MCF 10A (cell line): ENCODE measurements at regions of chr3 and their contacts with region 1.

Region 1: GRCh38 chr3:122415720-122416654 is at the start of gene WDR5B:
- DNase-seq: peak; percentile 98
- H3K4me3 Mint-ChIP-seq: peak within 1 kb of the TSS; percentile 99
- H3K27ac Mint-ChIP-seq: peak within 1 kb of the TSS; percentile 99
- H3K4me1 Mint-ChIP-seq: peaks cover 32% of the 10 kb centered on the region
- H3K27me3 Mint-ChIP-seq: no peaks in the 10 kb centered on the region
- CTCF ChIP-seq: no peak
- total RNA-seq, gene WDR5B: 10.0 and 11.0 TPM in 2 replicates

Region 2: GRCh38 chr3:122233101-122233952 is 182.7 kb before region 1 on chr3:
- CTCF ChIA-PET with region 1: no interaction called
- POLR2A ChIA-PET with region 1: no interaction called
- intact Hi-C with region 1: no loop called
- DNase-seq: no peak
- H3K4me3 Mint-ChIP-seq: no peak overlapping the region
- H3K27ac Mint-ChIP-seq: no peak overlapping the region
- H3K4me1 Mint-ChIP-seq: no peaks in the 10 kb centered on the region
- H3K27me3 Mint-ChIP-seq: peaks cover 20% of the 10 kb centered on the region
- CTCF ChIP-seq: no peak

Region 3: DNA sequence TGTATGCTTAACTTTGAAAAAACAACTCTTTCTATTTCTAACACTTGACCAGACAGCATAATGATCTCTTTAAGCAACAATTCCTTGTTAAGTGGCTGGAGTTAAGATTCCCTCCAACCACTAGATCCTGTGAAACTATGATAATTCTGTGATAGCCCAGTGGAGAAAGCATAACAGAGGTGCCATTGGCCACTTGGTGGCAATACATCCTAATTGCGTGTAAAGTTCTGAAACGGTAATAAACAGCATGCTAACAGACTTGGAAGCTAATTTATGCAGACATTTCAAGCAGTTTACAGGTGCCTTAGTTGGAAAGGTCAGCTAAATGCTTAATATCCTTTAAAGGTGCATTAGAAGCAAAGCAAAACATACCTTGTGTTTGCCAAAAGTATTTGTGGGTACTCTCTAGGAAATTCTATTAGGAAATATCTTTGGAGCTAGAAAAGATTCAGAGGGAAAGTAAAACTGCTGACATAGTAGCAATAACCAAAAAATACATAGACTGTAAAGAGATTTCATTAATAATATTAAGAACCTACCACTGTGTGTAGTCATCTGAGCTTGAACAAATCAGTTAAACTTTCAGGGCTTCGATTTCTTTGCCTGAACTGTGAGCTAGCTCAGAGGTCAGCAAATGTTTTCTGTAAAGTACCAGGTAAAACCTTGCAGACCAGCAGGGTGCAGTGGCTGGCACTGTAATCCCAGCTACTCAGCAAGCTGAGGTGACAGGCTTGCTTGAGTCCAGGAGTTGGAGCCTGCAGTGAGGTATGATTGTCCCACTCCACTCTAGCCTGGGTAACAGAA is 110.0 kb before region 1 on chr3:
- CTCF ChIA-PET with region 1: interaction called, 23 read pairs
- POLR2A ChIA-PET with region 1: interaction called, 25 read pairs
- intact Hi-C with region 1: no loop called
- DNase-seq: peak; percentile 52
- H3K4me3 Mint-ChIP-seq: no peak overlapping the region
- H3K27ac Mint-ChIP-seq: no peak overlapping the region
- H3K4me1 Mint-ChIP-seq: no peaks in the 10 kb centered on the region
- H3K27me3 Mint-ChIP-seq: no peaks in the 10 kb centered on the region
- CTCF ChIP-seq: peak; percentile 38

Region 4: DNA sequence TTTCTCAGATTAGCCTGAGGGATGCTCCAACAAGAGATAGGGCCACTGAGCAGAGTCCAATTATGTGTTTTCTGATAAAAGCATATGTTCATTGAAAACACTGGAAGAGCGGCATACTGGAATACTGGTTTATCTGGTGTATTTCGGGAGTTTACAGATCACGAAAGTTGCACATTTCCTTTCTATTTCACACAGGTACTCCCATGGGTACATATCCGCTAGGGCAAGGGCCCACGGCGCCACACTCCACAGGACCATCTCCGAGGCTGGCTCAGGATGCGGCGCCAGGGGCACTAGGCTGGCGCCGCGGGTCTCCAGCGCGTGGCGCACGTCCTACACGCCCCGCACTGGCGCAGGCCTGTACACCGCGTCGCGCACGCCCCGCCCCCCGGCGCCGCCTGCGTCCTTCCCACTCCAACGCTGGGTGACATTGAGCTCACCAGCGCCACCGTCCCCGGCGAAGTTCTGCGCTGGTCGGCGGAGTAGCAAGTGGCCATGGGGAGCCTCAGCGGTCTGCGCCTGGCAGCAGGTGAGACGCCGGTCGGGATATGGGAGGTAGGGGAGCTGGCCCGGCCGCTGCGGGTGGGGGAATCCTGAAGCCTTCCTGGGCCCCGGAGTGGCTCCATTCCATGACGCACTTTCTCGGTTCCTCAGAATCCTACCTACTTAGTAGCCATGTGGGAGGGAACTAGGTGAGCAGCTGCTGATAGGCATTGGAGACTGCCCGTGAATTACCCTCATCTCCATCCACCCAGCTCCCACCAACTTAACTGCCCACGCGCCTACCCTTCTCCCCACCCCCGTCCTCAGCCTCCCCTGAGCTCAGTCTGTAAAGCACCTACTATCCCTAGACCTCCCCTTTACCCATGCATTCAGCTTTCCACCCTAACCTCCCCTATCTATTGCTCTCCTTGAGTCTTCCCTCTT is 32.0 kb before region 1 on chr3 and contains the start of gene FAM162A:
- CTCF ChIA-PET with region 1: interaction called, 9 read pairs
- POLR2A ChIA-PET with region 1: interaction called, 91 read pairs
- intact Hi-C with region 1: no loop called
- DNase-seq: peak; percentile 93
- H3K4me3 Mint-ChIP-seq: peak within 1 kb of the TSS; percentile 98
- H3K27ac Mint-ChIP-seq: peak within 1 kb of the TSS; percentile 97
- H3K4me1 Mint-ChIP-seq: peaks cover 22% of the 10 kb centered on the region
- H3K27me3 Mint-ChIP-seq: no peaks in the 10 kb centered on the region
- CTCF ChIP-seq: peak; percentile 22
- total RNA-seq, gene FAM162A: 50.6 and 59.1 TPM in 2 replicates

Region 5: DNA sequence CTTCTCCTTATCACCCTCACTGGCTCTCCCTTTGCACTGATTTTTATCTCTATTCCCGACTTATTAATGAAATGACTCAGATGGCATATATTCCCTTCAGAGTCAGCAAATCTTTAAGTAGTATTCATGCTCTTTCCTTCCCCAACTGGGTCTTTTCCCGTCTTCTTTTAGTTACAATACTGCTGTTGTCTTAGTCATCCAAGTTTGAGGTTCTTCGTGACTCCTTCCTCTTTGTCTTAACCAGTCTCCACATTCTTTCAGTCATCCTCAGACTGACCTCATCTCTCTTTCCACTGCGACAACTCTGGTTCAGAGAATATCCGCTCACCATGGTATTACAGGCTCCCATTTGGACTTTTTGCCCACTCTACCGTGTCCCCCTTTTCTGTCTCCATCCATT is 12.5 kb before region 1 on chr3:
- CTCF ChIA-PET with region 1: interaction called, 3 read pairs
- POLR2A ChIA-PET with region 1: interaction called, 10 read pairs
- intact Hi-C with region 1: no loop called
- DNase-seq: no peak
- H3K4me3 Mint-ChIP-seq: no peak overlapping the region
- H3K27ac Mint-ChIP-seq: no peak overlapping the region
- H3K4me1 Mint-ChIP-seq: peaks cover 6% of the 10 kb centered on the region
- H3K27me3 Mint-ChIP-seq: no peaks in the 10 kb centered on the region
- CTCF ChIP-seq: no peak

Region 6: GRCh38 chr3:122443090-122443489 is 27.1 kb after region 1 on chr3:
- CTCF ChIA-PET with region 1: no interaction called
- POLR2A ChIA-PET with region 1: interaction called, 17 read pairs
- intact Hi-C with region 1: no loop called
- DNase-seq: no peak
- H3K4me3 Mint-ChIP-seq: no peak overlapping the region
- H3K27ac Mint-ChIP-seq: no peak overlapping the region
- H3K4me1 Mint-ChIP-seq: peaks cover 14% of the 10 kb centered on the region
- H3K27me3 Mint-ChIP-seq: no peaks in the 10 kb centered on the region
- CTCF ChIP-seq: no peak

Region 7: DNA sequence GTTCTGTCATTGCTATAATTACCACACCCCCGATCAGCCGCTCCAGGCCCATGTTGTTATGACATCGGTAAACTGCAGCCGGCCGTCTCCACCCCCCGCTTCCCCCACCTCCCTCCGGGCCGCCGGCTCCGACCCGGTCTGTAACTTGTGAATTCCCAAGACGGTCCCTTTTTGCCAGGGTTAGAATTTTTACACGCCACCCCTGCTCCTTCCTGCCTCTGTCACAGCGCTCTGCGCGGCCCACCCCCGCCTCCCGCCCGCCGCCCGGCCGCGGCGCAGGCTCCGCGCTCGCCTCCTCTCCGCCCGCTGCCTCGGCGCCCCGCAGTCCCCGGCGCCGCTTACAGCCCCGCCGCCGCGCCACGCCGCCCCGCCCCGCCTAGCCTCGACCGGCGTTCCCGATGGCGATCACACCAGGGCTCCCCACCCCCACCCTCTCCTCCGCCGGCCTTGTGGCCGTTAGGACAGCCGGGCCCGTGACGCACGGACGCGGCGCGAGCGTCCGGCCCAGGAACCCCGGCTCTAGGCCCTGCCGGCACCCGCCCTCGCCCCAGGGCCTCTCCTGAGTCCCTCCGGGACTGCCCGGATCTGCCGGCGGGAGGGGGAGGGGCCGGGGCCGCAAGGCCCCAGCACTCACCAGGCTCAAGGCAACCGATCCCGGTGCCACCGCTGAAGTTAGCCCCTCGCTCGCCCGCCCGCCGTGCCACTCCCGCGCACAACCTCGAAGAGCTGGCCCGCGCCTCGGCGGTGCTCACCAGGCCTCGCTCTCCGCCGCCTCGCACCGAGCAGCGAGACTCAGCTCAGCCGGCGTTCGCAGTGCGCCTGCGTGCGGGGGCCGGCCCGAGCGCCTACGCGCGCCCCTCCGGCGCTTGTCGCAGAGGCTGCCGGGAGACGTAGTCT is 98.4 kb after region 1 on chr3 and contains the start of gene KPNA1:
- CTCF ChIA-PET with region 1: interaction called, 3 read pairs
- POLR2A ChIA-PET with region 1: interaction called, 23 read pairs
- intact Hi-C with region 1: loop called (anchors 5 kb)
- DNase-seq: peak; percentile 88
- H3K4me3 Mint-ChIP-seq: peak within 1 kb of the TSS; percentile 81
- H3K27ac Mint-ChIP-seq: peak within 1 kb of the TSS; percentile 84
- H3K4me1 Mint-ChIP-seq: peaks cover 34% of the 10 kb centered on the region
- H3K27me3 Mint-ChIP-seq: no peaks in the 10 kb centered on the region
- CTCF ChIP-seq: no peak
- total RNA-seq, gene KPNA1: 101 and 104 TPM in 2 replicates

Region 8: GRCh38 chr3:122564155-122564912 is 148.3 kb after region 1 on chr3 and contains the starts of genes DTX3L and PARP9:
- CTCF ChIA-PET with region 1: no interaction called
- POLR2A ChIA-PET with region 1: interaction called, 13 read pairs
- intact Hi-C with region 1: no loop called
- DNase-seq: peak; percentile 83
- H3K4me3 Mint-ChIP-seq: peak within 1 kb of the TSS; percentile 92
- H3K27ac Mint-ChIP-seq: peak within 1 kb of the TSS; percentile 94
- H3K4me1 Mint-ChIP-seq: peaks cover 11% of the 10 kb centered on the region
- H3K27me3 Mint-ChIP-seq: no peaks in the 10 kb centered on the region
- CTCF ChIP-seq: no peak
- total RNA-seq, gene DTX3L: 19.0 and 19.1 TPM in 2 replicates
- total RNA-seq, gene PARP9: 6.3 and 11.9 TPM in 2 replicates

Region 9: DNA sequence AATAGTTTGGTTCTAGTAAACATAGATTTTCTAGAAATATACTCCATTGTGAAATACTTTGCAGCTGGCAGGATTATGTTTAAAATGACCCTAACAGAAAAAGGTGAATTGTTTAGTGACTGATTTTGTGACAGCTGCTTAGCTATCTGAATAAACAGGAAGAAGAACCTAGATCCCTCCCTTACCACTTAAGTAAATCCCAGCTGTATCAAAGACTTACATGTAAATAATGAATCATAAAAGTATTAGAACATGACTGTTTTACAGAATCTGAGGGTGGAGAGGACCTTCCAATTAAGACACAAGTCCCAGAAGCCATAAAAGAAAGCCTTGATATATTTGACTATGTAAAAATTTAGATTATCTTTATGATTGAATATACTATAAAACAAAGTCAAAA is 394.7 kb after region 1 on chr3:
- CTCF ChIA-PET with region 1: no interaction called
- POLR2A ChIA-PET with region 1: no interaction called
- intact Hi-C with region 1: no loop called
- DNase-seq: no peak
- H3K4me3 Mint-ChIP-seq: no peak overlapping the region
- H3K27ac Mint-ChIP-seq: no peak overlapping the region
- H3K4me1 Mint-ChIP-seq: no peaks in the 10 kb centered on the region
- H3K27me3 Mint-ChIP-seq: no peaks in the 10 kb centered on the region
- CTCF ChIP-seq: no peak